Tibial artery (tissue), 4 donors: ENCODE measurements at regions of chr7 and their contacts with region 1.

Region 1: GRCh38 chr7:76179686-76180085 is 22.0 kb upstream of the SRRM3 start:
- DNase-seq: no peak
- H3K4me3 ChIP-seq: no peak overlapping the region
- H3K27ac ChIP-seq: no peak overlapping the region
- H3K4me1 ChIP-seq: no peaks in the 10 kb centered on the region
- H3K27me3 ChIP-seq: no peaks in the 10 kb centered on the region
- CTCF ChIP-seq: no peak

Region 2: GRCh38 chr7:76122516-76123239 is 57.0 kb before region 1 on chr7:
- intact Hi-C with region 1: no loop called
- DNase-seq: no peak
- H3K4me3 ChIP-seq: no peak overlapping the region
- H3K27ac ChIP-seq: no peak overlapping the region
- H3K4me1 ChIP-seq: no peaks in the 10 kb centered on the region
- H3K27me3 ChIP-seq: no peaks in the 10 kb centered on the region
- CTCF ChIP-seq: no peak

Region 3: DNA sequence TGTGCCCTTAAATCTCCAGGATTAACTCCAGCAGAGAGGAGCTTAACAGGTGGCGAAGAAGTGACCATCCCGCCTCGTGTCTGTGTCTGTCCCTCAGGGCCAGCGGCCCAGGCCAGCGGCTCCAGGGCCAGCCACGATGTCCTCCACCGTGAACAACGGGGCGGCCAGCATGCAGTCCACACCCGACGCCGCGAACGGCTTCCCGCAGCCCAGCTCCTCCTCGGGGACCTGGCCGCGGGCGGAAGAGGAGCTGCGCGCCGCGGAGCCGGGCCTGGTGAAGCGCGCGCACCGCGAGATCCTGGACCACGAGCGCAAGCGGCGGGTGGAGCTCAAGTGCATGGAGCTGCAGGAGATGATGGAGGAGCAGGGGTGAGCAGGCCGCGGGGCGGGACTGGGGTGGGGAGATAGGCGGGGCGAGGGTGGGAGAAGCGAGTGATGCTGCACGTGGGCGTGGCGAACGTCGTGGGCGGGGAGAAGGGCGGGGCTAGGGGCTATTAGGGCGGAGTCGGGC is 55.3 kb after region 1 on chr7:
- intact Hi-C with region 1: no loop called
- DNase-seq: peak in 1 of 2 donors; percentile 24
- H3K4me3 ChIP-seq: peak overlapping the region in 1 of 2 donors; percentile 25
- H3K27ac ChIP-seq: no peak overlapping the region
- H3K4me1 ChIP-seq: peaks cover 0 to 7% (median 6%) of the 10 kb centered on the region in 4 donors
- H3K27me3 ChIP-seq: peaks cover 0 to 76% of the 10 kb centered on the region in 2 donors
- CTCF ChIP-seq: no peak

Region 4: GRCh38 chr7:76285604-76286374 is 106.1 kb after region 1 on chr7:
- intact Hi-C with region 1: loop called (anchors 5 kb)
- DNase-seq: no peak
- H3K4me3 ChIP-seq: no peak overlapping the region
- H3K27ac ChIP-seq: no peak overlapping the region
- H3K4me1 ChIP-seq: peaks cover 0 to 25% (median 20%) of the 10 kb centered on the region in 4 donors
- H3K27me3 ChIP-seq: peaks cover 0 to 30% of the 10 kb centered on the region in 2 donors
- CTCF ChIP-seq: no peak

Region 5: GRCh38 chr7:76314042-76314721 is 134.5 kb after region 1 on chr7:
- intact Hi-C with region 1: loop called (anchors 2 kb)
- DNase-seq: peak; percentile 96 to 97
- H3K4me3 ChIP-seq: no peak overlapping the region
- H3K27ac ChIP-seq: peak overlapping the region; percentile 18 to 37
- H3K4me1 ChIP-seq: peaks cover 0 to 33% (median 21%) of the 10 kb centered on the region in 4 donors
- H3K27me3 ChIP-seq: no peaks in the 10 kb centered on the region
- CTCF ChIP-seq: peak; percentile 100

Region 6: GRCh38 chr7:76327610-76328009 is 147.9 kb after region 1 on chr7:
- intact Hi-C with region 1: no loop called
- DNase-seq: no peak
- H3K4me3 ChIP-seq: no peak overlapping the region
- H3K27ac ChIP-seq: no peak overlapping the region
- H3K4me1 ChIP-seq: peaks cover 0 to 64% (median 22%) of the 10 kb centered on the region in 4 donors
- H3K27me3 ChIP-seq: no peaks in the 10 kb centered on the region
- CTCF ChIP-seq: no peak

Region 7: GRCh38 chr7:76359111-76359978 is 179.7 kb after region 1 on chr7:
- intact Hi-C with region 1: no loop called
- DNase-seq: peak; percentile 98 to 99
- H3K4me3 ChIP-seq: peak overlapping the region; percentile 66 to 87
- H3K27ac ChIP-seq: peak overlapping the region; percentile 92 to 97
- H3K4me1 ChIP-seq: peaks cover 0 to 45% (median 17%) of the 10 kb centered on the region in 4 donors
- H3K27me3 ChIP-seq: no peaks in the 10 kb centered on the region
- CTCF ChIP-seq: peak; percentile 62 to 81